Panc1 (cell line): ENCODE measurements at regions of chr14 and their contacts with region 1.

Region 1: GRCh38 chr14:89424241-89424640 is 7.2 kb upstream of the FOXN3 start:
- DNase-seq: no peak
- ATAC-seq: no peak
- H3K4me3 ChIP-seq: no peak overlapping the region
- H3K27ac ChIP-seq: no peak overlapping the region
- H3K4me1 ChIP-seq: no peaks in the 10 kb centered on the region
- H3K27me3 ChIP-seq: no peaks in the 10 kb centered on the region; the same call in 1 of the 2 replicates
- CTCF ChIP-seq: no peak

Region 2: DNA sequence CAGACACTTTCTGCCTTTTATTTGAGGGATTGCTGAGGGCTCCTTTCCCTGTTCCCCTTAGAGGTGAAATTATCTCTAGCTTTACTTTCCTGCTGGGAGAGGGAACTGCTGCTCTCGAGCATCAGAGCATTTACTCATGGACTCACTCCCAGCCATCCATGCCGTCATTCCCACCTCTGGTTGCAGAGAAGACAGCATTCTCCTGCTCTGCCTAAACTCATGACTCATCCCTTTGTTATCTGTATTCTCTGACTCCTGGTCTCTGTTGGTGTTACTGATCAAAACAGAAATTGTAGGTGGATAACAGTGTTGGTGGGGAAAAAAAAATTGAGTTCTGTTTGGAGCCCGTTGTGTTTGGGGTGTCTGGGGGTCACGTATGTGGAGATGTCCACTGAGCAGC is 440.5 kb before region 1 on chr14:
- CTCF ChIA-PET with region 1: interaction called, 11 read pairs
- POLR2A ChIA-PET with region 1: no interaction called
- in situ Hi-C with region 1: no loop called
- intact Hi-C with region 1: no loop called
- DNase-seq: no peak
- ATAC-seq: no peak
- H3K4me3 ChIP-seq: no peak overlapping the region
- H3K27ac ChIP-seq: no peak overlapping the region
- H3K4me1 ChIP-seq: no peaks in the 10 kb centered on the region
- H3K27me3 ChIP-seq: no peaks in the 10 kb centered on the region
- CTCF ChIP-seq: no peak

Region 3: DNA sequence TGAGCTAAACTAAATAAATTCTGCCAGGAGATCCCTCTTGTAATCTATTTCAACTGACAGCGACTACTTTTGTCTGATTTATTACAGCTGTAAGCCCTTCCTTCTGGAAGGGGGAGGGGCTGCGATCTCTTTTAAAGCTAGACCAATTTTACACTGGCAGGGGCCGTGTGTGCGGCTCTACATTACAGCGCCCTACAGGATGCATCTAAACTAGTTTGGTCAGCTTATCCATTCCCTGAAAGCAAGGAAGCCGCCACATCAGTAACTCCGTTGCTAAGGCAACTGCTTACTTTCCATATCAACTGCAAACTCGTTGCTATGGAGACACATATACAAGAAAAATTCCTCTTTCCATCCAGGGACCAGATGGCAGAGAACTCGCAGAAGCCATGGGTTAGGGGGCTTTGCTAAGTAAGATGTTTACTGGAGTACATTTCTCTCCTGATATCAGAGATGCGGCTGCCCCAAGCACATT is 24.6 kb before region 1 on chr14:
- CTCF ChIA-PET with region 1: no interaction called
- POLR2A ChIA-PET with region 1: no interaction called
- in situ Hi-C with region 1: no loop called
- intact Hi-C with region 1: no loop called
- DNase-seq: no peak
- ATAC-seq: no peak
- H3K4me3 ChIP-seq: no peak overlapping the region
- H3K27ac ChIP-seq: no peak overlapping the region
- H3K4me1 ChIP-seq: no peaks in the 10 kb centered on the region
- H3K27me3 ChIP-seq: no peaks in the 10 kb centered on the region
- CTCF ChIP-seq: no peak

Region 4: GRCh38 chr14:89519040-89519439 is 94.8 kb after region 1 on chr14:
- CTCF ChIA-PET with region 1: no interaction called
- POLR2A ChIA-PET with region 1: no interaction called
- in situ Hi-C with region 1: no loop called
- intact Hi-C with region 1: no loop called
- DNase-seq: no peak
- ATAC-seq: no peak
- H3K4me3 ChIP-seq: no peak overlapping the region
- H3K27ac ChIP-seq: no peak overlapping the region
- H3K4me1 ChIP-seq: no peaks in the 10 kb centered on the region
- H3K27me3 ChIP-seq: no peaks in the 10 kb centered on the region
- CTCF ChIP-seq: no peak